ENCODE measurements at regions of chr14 and their contacts with region 1.

Region 1: GRCh38 chr14:50943943-50944646 is at the start of gene PYGL:
- DNase-seq: peak; percentile 85

Region 2: DNA sequence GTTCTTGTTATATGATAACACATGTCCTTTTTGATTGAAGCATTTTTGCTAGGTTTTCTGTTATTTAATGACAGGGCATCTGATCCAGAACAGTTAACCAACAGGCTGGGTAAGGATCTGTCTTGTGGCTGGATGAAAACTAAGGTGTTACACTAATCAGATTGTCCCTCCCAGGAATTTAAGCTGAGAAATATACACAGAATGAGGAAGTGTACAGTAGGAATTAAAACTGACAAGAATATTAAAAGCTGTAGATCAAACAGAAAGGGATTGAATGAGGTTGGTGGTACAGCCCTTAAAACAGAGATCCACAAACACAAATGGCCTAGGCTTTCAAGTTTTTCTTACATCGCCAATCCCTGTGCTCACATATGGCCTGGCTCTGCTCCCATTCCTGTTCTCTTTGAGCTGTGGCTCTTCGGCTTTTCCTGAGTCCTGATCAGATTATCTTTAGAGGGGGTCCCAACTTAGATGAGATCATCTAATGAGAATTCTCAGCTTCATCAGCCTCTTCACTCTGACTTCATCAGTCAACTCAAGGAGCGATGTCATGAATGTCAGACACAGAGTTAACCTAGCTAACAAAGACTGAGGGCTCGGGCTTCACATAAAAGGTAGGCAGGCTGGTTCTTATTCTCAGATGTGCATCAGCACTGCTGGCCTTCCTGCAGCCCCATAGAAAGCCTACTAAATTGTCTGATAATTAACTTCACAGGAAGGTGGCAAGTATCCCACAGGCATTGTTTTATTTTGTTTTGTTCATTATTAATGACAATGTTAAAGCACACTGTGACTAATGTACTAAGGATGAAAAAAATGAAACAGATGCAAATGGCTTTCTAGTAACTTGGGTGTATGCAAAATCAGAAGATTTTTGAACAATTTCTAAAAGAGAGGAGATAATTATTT is 11.2 kb before region 1 on chr14:
- CTCF ChIA-PET with region 1: no interaction called
- POLR2A ChIA-PET with region 1: interaction called, 15 read pairs
- DNase-seq: no peak

Region 3: GRCh38 chr14:50957296-50957695 is 13.2 kb after region 1 on chr14:
- CTCF ChIA-PET with region 1: no interaction called
- POLR2A ChIA-PET with region 1: interaction called, 17 read pairs
- DNase-seq: peak; percentile 20

Region 4: GRCh38 chr14:50964595-50965390 is 20.7 kb after region 1 on chr14:
- CTCF ChIA-PET with region 1: interaction called, 3 read pairs
- POLR2A ChIA-PET with region 1: interaction called, 17 read pairs
- DNase-seq: no peak

Region 5: GRCh38 chr14:51014086-51014485 is 70.0 kb after region 1 on chr14:
- CTCF ChIA-PET with region 1: no interaction called
- POLR2A ChIA-PET with region 1: no interaction called
- DNase-seq: peak; percentile 23

Region 6: DNA sequence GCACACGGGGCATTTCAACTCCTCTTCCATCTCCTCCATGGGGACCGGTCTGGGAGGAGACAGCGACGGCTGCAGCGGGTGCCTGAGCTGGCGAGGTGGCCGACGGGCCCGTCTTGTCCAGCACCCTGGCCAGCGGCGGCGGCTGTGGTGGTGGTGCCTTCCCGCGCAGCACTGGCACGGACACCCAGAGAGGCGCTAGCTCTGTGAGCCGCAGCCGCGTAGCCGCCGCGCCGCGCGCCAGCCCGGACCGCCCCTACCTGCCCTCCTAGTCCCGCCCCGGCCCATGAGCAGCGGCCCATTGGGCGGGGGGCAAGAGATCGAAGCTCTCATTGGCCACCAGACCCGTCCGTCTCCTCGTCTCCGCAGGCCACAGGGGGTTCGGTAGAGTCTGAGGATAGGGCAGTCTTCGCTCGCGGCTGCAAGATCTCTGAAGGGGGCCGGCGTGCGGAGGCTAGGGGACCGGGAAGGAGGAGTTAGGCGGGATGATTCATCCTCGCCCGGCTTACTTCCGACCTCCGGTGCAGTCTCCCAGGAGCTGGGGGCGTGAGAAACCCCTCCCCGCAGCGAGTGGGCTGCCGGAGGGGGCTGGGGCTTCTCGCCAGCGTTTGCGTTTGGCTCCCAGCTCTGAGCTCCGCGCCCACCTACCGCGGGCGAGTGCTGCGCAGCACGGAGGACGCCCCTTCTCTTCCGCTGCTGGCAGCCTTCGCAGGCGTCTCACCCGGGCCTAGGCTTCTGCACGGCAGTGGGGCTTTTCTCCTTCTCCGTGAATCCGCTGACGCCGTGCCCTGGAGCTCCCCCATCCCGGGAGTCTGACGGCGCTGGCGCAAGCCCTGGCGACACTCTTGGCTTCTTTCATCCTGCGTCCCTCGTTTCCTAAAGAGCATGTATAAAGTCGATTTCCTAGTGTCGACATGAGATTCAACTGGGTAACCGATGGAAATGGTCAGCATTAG is 151.1 kb after region 1 on chr14 and contains the start of gene TRIM9:
- CTCF ChIA-PET with region 1: no interaction called
- POLR2A ChIA-PET with region 1: interaction called, 47 read pairs
- DNase-seq: peak; percentile 98

Measured in HEK293T (cell line).